PC-3 (cell line): ENCODE measurements at regions of chrX and their contacts with region 1.

Region 1: DNA sequence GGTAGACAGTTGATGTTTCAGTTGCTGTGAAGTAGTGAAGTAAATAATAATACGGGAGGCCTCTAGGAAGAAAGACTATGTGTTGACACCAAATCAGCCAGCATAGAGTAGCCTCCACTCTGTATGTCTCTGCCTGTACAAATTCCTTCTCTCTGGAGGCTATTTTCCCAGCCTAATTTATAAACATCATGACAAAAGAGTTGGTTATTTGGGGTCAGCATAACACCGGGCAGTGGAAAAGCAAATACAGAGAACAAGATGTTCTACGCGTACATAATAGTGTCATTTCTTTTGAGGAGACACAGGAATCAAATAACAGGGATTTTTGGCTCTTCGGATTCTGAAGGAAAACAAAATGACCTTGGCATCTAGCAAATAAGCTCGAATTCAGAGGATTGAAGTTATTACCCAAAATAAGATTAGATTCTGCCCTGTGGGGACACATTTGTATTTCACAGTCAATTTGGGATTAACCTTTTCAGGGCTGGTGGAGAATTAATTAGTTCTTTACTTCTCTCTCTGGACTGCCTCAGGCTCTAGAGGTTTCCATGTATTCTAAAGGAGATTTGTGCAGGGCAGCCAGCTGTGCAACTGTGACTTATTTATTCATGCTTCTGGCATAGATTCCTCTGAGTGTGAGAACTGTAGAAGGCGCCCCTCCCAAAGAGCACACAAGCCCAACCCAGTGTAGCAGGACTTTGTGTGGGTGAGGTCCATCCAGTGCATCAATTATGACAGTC is 14.0 kb upstream of the SYTL4 start:
- DNase-seq: no peak
- ATAC-seq: peak; percentile 68
- H3K4me3 ChIP-seq: no peak overlapping the region
- H3K27ac ChIP-seq: no peak overlapping the region
- H3K4me1 ChIP-seq: peaks cover 9% of the 10 kb centered on the region
- H3K27me3 ChIP-seq: no peaks in the 10 kb centered on the region
- CTCF ChIP-seq: no peak

Region 2: DNA sequence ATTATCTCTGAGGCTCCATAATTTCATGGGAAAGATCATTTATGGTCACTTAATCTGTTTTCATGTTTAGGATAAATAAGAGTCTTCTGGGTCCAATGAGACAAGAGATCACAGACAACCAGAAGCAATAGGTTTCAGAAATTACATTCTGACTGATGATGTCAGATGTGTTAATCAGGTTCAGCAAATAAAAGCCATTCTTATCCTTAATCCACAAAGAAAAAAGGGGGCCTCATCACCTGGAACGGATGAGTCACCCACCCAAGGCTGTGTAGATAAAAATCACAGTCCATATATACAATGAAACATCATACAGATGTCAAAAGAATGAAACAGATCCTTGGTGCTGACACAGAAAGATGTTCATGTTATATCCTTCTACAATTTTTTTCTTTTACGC is 50.7 kb before region 1 on chrX:
- CTCF ChIA-PET with region 1: no interaction called
- POLR2A ChIA-PET with region 1: no interaction called
- intact Hi-C with region 1: loop called (anchors 5 kb)
- DNase-seq: peak; percentile 54
- ATAC-seq: no peak
- H3K4me3 ChIP-seq: no peak overlapping the region
- H3K27ac ChIP-seq: peak overlapping the region; percentile 76
- H3K4me1 ChIP-seq: peaks cover 25% of the 10 kb centered on the region
- H3K27me3 ChIP-seq: no peaks in the 10 kb centered on the region
- CTCF ChIP-seq: no peak

Region 3: DNA sequence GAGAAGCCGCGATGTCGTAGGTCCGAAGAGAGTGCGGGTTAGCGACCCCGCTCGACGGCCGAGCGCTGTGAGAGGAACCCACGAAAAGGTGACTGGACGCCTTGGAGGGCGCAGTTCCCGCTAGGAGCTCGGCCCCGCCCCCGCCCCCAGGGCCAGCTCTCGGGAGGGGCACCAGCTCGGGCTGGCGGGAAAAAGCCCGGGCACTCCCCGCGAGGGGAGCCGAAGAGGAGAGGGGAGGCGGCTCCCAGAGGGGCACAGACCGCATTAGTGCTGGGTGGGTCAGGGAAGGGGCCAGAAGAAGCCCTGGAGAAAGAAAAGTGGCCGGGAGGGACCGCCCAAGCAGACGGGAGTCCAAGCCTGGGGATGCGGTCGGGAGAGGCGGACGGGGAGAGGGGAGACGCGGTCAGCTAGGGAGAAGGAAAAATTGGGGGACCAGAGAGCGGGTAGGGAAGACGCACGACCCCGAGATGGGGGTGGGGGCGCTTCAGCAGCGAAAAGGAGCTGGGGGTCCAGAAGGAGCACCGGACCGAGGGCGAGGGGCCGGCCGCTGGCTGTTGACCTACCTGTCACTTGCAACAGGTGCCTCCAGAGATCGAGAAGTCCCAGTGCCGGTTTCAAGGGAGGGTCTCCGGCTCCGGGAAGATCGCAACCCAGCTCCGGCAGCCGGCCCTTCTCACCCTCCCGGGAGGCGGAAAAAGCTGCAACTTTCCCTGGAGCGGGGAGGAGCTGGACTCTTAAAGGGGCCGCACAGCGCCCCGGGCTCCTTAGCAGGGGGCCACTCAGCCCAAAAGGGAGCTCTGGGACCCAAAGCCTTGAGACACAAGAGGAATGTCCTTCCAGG is 14.3 kb before region 1 on chrX and contains the start of gene SYTL4:
- CTCF ChIA-PET with region 1: no interaction called
- POLR2A ChIA-PET with region 1: no interaction called
- intact Hi-C with region 1: loop called (anchors 1 kb)
- DNase-seq: peak; percentile 20
- ATAC-seq: peak; percentile 93
- H3K4me3 ChIP-seq: peak within 1 kb of the TSS; percentile 87
- H3K27ac ChIP-seq: no peak within 1 kb of the TSS
- H3K4me1 ChIP-seq: no peaks in the 10 kb centered on the region; the same call in 1 of the 2 replicates
- H3K27me3 ChIP-seq: no peaks in the 10 kb centered on the region
- CTCF ChIP-seq: no peak
- total RNA-seq, gene SYTL4: 2.7 and 3.2 TPM in 2 replicates

Region 4: DNA sequence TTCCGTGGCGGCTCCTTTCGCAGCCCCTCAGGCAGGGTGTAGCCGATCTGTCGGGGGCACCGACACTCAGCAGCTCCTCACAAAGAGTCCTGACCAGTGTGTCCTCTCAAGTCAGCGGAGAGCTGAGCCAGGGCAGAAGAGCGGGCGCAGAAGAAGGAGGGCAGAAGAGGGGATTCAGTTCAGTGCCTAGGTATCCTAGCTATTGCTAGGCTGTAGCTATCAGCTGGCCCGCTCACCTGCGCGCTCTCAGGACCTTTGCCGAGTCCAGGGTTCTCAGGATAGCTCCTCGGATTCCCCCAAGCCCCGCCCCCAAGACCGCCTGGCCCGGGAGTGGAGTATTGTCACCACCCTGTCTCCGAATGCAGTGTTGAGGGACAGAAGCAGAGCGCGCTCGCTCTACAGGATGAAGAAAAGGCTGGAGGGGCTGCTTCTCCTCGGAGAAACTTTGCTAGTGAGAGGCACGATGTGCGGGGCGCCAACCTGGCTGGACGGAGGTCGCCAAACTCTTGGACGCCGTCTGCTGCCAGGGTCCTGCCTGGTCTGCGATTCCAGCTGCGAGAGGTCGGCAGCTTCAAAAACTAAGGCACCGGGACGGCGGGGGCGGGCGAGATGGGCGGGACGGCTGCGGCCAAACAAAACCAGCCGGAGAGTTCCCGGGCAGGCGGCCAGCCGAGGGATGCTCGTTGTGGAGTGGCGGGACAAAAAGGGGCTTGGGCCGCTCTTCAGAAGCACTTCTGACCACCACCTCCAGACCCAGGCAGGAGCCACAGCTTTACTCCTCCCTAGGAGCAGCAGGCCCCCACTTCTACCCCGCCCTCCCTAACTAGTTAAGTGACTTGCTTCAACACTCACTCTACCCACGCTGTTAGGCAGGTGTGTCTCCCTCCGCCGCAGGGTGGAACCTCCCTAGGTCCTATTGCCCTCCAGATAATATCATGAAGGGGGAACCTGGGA is 183.0 kb after region 1 on chrX and contains the start of gene XKRX:
- CTCF ChIA-PET with region 1: no interaction called
- POLR2A ChIA-PET with region 1: no interaction called
- intact Hi-C with region 1: no loop called
- DNase-seq: peak; percentile 40
- ATAC-seq: peak; percentile 89
- H3K4me3 ChIP-seq: peak within 1 kb of the TSS; percentile 65
- H3K27ac ChIP-seq: no peak within 1 kb of the TSS
- H3K4me1 ChIP-seq: no peaks in the 10 kb centered on the region
- H3K27me3 ChIP-seq: no peaks in the 10 kb centered on the region
- CTCF ChIP-seq: no peak
- total RNA-seq, gene XKRX: 0.46 and 0.55 TPM in 2 replicates